Caco-2 (cell line): ENCODE measurements at regions of chr15 and their contacts with region 1.

Region 1: DNA sequence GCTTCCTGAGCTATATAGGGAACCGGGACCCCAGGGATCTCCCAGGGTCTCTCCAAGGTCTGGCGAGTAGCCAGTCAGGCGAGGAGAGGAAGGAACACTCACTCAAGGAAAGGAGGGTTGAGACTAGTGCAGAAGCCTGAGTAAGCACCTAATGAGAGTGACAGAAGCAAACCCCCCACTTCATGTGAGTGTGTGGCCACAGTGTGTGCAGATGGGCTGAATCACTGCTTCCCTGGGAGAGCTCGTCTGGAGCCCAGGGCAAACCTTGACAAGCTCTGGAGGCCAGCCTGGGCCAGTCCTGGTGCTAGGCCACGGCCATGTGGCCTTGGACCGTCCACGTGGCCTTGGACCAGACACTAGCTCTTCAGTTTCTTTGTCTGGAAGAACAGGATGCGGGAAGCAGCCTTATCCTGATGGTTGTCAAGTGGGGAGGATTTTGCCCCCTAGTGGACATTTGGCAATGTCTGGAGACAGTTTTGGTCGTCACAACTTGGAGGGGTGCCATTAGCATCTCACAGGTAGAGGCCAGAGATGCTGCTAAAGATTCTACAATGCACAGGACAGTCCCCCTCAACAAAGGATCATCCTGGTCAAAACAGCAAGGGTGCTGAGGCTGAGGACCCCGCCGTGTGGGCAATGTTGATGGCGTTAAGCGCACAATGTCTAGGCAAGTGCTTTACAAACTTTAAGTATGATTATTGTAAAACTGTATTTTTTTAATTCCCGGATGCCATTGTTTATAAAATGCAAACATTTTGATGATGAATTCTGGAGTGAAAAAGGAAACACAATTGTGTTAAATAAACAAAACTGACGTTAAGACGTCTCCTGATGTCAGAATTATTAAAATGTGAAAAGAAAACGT is 34.8 kb upstream of the CTSH start:
- DNase-seq: peak; percentile 77 to 81
- H3K4me3 ChIP-seq: no peak overlapping the region
- H3K4me3 Mint-ChIP-seq: no peak overlapping the region
- H3K27ac Mint-ChIP-seq: peak overlapping the region; percentile 18
- H3K4me1 ChIP-seq: 0 out of 2 replicates have a peak, but pooled peaks cover 3% of the 10 kb centered on the region
- H3K4me1 Mint-ChIP-seq: peaks cover 12% of the 10 kb centered on the region
- H3K27me3 ChIP-seq: no peaks in the 10 kb centered on the region
- H3K27me3 Mint-ChIP-seq: no peaks in the 10 kb centered on the region
- CTCF ChIP-seq: peak; percentile 73 to 74

Region 2: DNA sequence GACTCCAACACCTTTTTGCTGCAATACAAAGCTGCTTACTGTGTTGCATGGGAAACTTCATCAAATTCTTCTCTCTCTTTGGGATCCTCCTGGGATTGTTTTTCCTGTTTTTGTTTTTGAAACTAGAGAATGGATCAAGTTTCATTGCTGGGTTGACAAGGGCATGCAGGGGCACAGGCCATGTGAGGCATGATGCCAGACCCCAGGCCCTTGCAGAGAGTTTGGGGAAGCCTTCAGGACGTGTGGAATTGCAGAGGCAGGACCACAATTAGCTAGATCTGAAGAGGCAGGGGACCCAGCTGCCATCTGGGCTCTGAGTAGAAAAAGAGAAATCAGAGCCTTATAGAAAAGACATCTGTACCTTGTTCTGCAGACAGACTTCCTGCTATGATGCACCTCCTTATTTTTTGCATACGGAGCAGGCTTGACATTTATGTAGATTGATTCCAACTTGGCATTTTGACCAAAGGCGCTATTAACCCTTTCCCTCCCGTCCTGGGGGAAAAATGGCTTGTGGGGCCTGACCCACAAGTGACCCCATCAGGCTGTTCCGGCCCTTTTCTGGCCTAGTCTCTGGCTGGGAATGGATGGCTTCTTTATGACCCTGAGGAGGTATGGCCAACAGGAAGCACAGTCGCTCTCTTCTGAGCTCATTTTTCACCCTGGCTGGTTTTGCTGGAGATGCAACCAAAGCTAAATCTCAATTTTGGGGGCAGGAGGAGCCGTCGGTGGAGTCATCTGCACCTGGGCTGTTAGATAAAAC is 294.3 kb before region 1 on chr15:
- CTCF ChIA-PET with region 1: no interaction called
- POLR2A ChIA-PET with region 1: no interaction called
- intact Hi-C with region 1: no loop called
- DNase-seq: no peak
- H3K4me3 ChIP-seq: no peak overlapping the region
- H3K4me3 Mint-ChIP-seq: no peak overlapping the region
- H3K27ac Mint-ChIP-seq: no peak overlapping the region
- H3K4me1 ChIP-seq: no peaks in the 10 kb centered on the region
- H3K4me1 Mint-ChIP-seq: no peaks in the 10 kb centered on the region
- H3K27me3 ChIP-seq: no peaks in the 10 kb centered on the region
- H3K27me3 Mint-ChIP-seq: no peaks in the 10 kb centered on the region
- CTCF ChIP-seq: no peak

Region 3: DNA sequence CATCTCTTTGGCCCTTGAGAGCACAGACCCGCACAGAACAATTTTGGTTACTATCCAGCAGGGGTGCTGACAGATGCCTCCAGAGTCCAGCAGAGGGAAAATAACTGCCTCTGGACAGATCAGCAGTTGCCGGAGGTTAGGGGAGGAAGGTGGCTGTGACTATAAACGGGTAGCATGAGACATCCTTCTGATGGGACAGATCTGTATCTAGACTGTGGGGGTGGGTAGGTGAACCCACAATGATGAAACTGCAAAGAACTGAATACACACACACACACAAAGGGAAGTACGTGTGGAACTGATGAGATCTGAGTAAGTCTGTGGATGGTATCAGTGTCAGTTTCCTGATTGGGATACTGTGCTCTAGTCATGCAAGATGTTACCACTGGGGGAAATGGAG is 189.7 kb before region 1 on chr15:
- CTCF ChIA-PET with region 1: no interaction called
- POLR2A ChIA-PET with region 1: no interaction called
- intact Hi-C with region 1: no loop called
- DNase-seq: no peak
- H3K4me3 ChIP-seq: no peak overlapping the region
- H3K4me3 Mint-ChIP-seq: no peak overlapping the region
- H3K27ac Mint-ChIP-seq: no peak overlapping the region
- H3K4me1 ChIP-seq: no peaks in the 10 kb centered on the region
- H3K4me1 Mint-ChIP-seq: no peaks in the 10 kb centered on the region
- H3K27me3 ChIP-seq: no peaks in the 10 kb centered on the region
- H3K27me3 Mint-ChIP-seq: no peaks in the 10 kb centered on the region
- CTCF ChIP-seq: no peak

Region 4: DNA sequence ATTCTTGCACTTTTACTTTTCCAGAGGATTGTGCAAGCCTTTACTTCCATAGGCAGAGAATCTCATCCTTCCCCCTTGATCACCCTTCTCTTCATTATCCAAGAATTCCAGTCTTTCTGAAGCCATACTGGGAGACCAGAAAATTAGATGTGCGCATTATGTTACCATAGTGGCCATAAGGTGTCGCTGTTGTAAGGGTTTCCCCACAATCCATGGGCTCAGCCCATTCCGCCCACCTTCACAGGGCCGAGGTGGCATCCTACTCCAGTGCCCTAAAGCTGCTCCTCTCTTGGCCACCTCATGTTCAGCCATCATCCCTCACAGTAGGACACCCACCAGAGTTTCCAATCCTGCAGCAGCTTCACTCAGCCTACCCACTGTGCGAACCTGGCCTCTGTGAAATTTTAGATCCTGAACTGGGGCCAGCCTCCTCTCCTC is 69.9 kb before region 1 on chr15:
- CTCF ChIA-PET with region 1: interaction called, 34 read pairs
- POLR2A ChIA-PET with region 1: no interaction called
- intact Hi-C with region 1: loop called (anchors 1 kb)
- DNase-seq: peak in 1 of 2 experiments; percentile 63
- H3K4me3 ChIP-seq: no peak overlapping the region
- H3K4me3 Mint-ChIP-seq: no peak overlapping the region
- H3K27ac Mint-ChIP-seq: no peak overlapping the region
- H3K4me1 ChIP-seq: no peaks in the 10 kb centered on the region
- H3K4me1 Mint-ChIP-seq: no peaks in the 10 kb centered on the region
- H3K27me3 ChIP-seq: no peaks in the 10 kb centered on the region
- H3K27me3 Mint-ChIP-seq: no peaks in the 10 kb centered on the region
- CTCF ChIP-seq: peak; percentile 52 to 68

Region 5: GRCh38 chr15:78944669-78945407 is 34.9 kb before region 1 on chr15 and contains the start of gene CTSH:
- CTCF ChIA-PET with region 1: interaction called, 20 read pairs
- POLR2A ChIA-PET with region 1: interaction called, 5 read pairs
- intact Hi-C with region 1: loop called (anchors 2 kb)
- DNase-seq: peak; percentile 95
- H3K4me3 ChIP-seq: peak within 1 kb of the TSS; percentile 82
- H3K4me3 Mint-ChIP-seq: peak within 1 kb of the TSS; percentile 94
- H3K27ac Mint-ChIP-seq: peak within 1 kb of the TSS; percentile 70
- H3K4me1 ChIP-seq: peaks cover 18% of the 10 kb centered on the region
- H3K4me1 Mint-ChIP-seq: peaks cover 4% of the 10 kb centered on the region
- H3K27me3 ChIP-seq: no peaks in the 10 kb centered on the region
- H3K27me3 Mint-ChIP-seq: no peaks in the 10 kb centered on the region
- CTCF ChIP-seq: no peak
- total RNA-seq, gene CTSH: 171 and 183 TPM in 2 replicates

Region 6: GRCh38 chr15:78950904-78951840 is 28.5 kb before region 1 on chr15:
- CTCF ChIA-PET with region 1: interaction called, 15 read pairs
- POLR2A ChIA-PET with region 1: no interaction called
- intact Hi-C with region 1: no loop called
- DNase-seq: no peak
- H3K4me3 ChIP-seq: no peak overlapping the region
- H3K4me3 Mint-ChIP-seq: no peak overlapping the region
- H3K27ac Mint-ChIP-seq: no peak overlapping the region
- H3K4me1 ChIP-seq: peaks cover 28% of the 10 kb centered on the region
- H3K4me1 Mint-ChIP-seq: peaks cover 31% of the 10 kb centered on the region
- H3K27me3 ChIP-seq: no peaks in the 10 kb centered on the region
- H3K27me3 Mint-ChIP-seq: no peaks in the 10 kb centered on the region
- CTCF ChIP-seq: peak in 1 of 2 experiments; percentile 22